Activated CD4-positive, alpha-beta T cell treated with anti-CD3 and anti-CD28 coated beads, Interleukin-2, amount 10 ng/mL, durations not matched to agents 7 days and 5 days (primary cell): ENCODE measurements at regions of chr1 and their contacts with region 1.

Region 1: GRCh38 chr1:8699679-8700078 is 117.8 kb downstream of the RERE start:
- DNase-seq: no peak
- H3K4me3 Mint-ChIP-seq: no peak overlapping the region
- H3K27ac Mint-ChIP-seq: no peak overlapping the region
- H3K4me1 Mint-ChIP-seq: peaks cover 42% of the 10 kb centered on the region
- H3K27me3 Mint-ChIP-seq: peaks cover 9% of the 10 kb centered on the region

Region 2: DNA sequence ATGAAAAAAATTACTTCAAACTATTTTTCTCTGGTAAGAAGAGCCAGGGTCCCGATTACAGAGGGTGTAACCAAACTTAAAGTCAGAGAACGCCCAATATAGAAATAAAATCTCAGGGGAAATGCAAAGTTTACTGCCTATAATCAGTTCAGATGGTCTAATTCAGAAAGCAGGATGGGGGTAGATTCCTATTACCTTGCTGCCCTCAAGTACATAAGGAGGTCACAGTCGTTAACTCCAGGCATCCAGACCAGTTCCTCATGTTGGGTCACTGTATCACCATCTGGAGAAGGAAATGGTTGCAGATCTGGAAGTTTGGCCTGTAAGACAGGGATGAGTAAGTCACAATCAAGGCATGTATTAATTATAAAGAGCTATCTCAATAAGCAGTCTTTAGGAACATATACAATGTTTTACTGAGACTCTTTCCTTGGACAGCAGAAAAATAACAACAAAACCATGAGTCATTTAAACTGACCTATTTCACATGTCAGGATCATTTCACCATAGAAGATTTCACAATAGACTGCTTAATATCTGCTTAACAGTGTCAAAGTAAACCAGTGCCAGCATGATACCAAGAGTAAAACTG is 202.4 kb before region 1 on chr1:
- CTCF ChIA-PET with region 1: no interaction called
- POLR2A ChIA-PET with region 1: no interaction called
- DNase-seq: no peak
- H3K4me3 Mint-ChIP-seq: no peak overlapping the region
- H3K27ac Mint-ChIP-seq: no peak overlapping the region
- H3K4me1 Mint-ChIP-seq: peaks cover 12% of the 10 kb centered on the region
- H3K27me3 Mint-ChIP-seq: no peaks in the 10 kb centered on the region

Region 3: DNA sequence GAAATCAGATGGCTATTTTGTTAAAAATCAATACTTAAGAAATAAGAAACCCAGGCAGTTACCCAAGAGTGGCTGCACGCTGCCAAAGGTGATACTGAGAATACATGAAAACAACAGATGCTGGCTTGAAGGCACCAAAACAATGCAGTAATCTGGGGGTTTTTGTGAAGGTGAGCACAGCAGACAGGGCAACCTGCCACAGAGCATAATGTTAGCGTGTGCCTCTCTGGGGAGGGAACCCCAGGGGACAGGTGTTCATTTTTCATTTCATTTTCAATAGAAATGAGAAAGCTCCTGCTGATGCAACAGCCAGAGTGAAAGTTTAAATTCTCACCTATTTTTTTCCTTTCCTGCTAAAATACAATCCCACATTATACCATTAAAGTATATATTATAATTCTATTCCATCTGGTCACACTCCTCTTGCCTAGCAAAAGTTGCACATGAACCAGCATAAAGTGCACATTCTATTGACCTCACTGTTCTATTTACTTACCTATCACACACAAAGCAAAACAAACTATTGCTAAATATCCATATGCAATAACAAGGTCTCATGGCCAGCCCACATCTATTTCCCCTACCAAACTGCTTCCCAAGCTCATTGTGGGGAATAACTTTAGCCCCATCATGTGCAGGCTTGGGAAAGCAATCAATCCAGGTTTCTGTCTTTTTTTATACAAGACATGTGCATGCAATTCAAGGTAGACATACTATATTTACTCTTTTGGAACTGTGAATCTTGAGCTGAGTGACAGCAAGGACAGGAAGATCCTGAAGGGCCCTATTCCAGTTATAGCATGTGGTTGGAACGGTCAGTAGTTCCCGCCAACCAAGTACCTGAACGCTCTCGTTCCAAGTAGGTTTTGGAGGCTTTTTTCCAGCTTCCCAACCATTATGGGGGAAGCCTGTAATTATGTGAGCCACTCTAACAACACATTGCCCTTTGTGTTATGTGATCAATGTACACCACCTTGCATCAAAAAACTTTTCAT is 55.8 kb before region 1 on chr1:
- CTCF ChIA-PET with region 1: no interaction called
- POLR2A ChIA-PET with region 1: no interaction called
- DNase-seq: no peak
- H3K4me3 Mint-ChIP-seq: no peak overlapping the region
- H3K27ac Mint-ChIP-seq: no peak overlapping the region
- H3K4me1 Mint-ChIP-seq: peaks cover 39% of the 10 kb centered on the region
- H3K27me3 Mint-ChIP-seq: no peaks in the 10 kb centered on the region

Region 4: DNA sequence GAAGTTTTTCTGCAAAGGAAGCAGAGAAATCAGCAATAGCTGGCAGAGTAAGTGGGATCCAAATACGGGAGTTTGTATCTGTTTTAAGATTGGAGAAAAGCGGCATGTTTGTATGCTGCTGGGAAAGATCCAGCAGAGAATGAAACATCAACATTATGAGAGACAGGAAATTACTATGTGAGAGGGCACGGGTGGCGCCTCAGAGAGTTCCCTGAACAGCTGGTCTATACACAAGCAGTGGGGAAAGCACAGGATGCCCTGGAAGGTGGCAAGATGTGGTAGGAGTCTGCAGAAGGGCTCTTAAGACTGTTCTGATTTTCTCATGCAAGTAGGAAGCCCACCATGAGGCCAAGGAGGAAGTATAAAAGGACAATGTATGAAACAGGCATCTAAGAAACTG is 12.6 kb before region 1 on chr1:
- CTCF ChIA-PET with region 1: interaction called, 14 read pairs
- POLR2A ChIA-PET with region 1: no interaction called
- DNase-seq: no peak
- H3K4me3 Mint-ChIP-seq: no peak overlapping the region
- H3K27ac Mint-ChIP-seq: no peak overlapping the region
- H3K4me1 Mint-ChIP-seq: peaks cover 50% of the 10 kb centered on the region
- H3K27me3 Mint-ChIP-seq: no peaks in the 10 kb centered on the region

Region 5: GRCh38 chr1:8947127-8947691 is 247.5 kb after region 1 on chr1:
- CTCF ChIA-PET with region 1: no interaction called
- POLR2A ChIA-PET with region 1: no interaction called
- DNase-seq: peak; percentile 27
- H3K4me3 Mint-ChIP-seq: peak overlapping the region; percentile 25
- H3K27ac Mint-ChIP-seq: peak overlapping the region; percentile 96
- H3K4me1 Mint-ChIP-seq: peaks cover 84% of the 10 kb centered on the region
- H3K27me3 Mint-ChIP-seq: no peaks in the 10 kb centered on the region

Region 6: DNA sequence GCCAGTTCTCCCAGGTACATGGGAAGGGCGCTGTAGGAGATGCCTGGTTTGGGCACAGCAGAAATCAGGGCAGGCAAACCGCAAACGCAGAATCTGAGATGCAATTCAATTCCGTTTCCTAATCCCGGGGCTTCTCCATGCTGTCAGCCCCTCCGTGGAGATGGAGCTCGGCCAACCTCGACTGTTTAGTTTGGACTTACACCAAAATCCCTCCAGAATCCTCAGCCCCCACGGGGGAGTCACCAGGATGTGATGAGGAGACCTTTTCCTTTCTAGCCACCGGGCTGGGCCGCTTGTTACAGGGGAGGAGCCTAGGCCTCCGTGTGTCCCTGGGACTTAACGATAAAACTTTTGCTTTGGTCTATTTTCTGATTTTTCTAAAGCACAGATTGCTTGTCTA is 318.7 kb after region 1 on chr1:
- CTCF ChIA-PET with region 1: no interaction called
- POLR2A ChIA-PET with region 1: no interaction called
- DNase-seq: no peak
- H3K4me3 Mint-ChIP-seq: no peak overlapping the region
- H3K27ac Mint-ChIP-seq: no peak overlapping the region
- H3K4me1 Mint-ChIP-seq: peaks cover 10% of the 10 kb centered on the region
- H3K27me3 Mint-ChIP-seq: peaks cover 18% of the 10 kb centered on the region